Activated CD4-positive, alpha-beta T cell treated with anti-CD3 and anti-CD28 coated beads for 36 hours (primary cell): ENCODE measurements at regions of chr12 and their contacts with region 1.

Region 1: GRCh38 chr12:68641138-68641537 is 30.4 kb downstream of the RAP1B start:
- DNase-seq: peak; percentile 71
- ATAC-seq: peak; percentile 97
- H3K4me3 Mint-ChIP-seq: peak overlapping the region; percentile 46
- H3K27ac Mint-ChIP-seq: peak overlapping the region; percentile 75
- H3K4me1 Mint-ChIP-seq: peaks cover 84% of the 10 kb centered on the region
- H3K27me3 Mint-ChIP-seq: no peaks in the 10 kb centered on the region

Region 2: GRCh38 chr12:68628698-68629097 is 12.4 kb before region 1 on chr12:
- CTCF ChIA-PET with region 1: interaction called, 7 read pairs
- POLR2A ChIA-PET with region 1: interaction called, 5 read pairs
- intact Hi-C with region 1: loop called in 1 of 2 experiments (anchors 1 kb)
- DNase-seq: no peak
- ATAC-seq: no peak
- H3K4me3 Mint-ChIP-seq: no peak overlapping the region
- H3K27ac Mint-ChIP-seq: peak overlapping the region; percentile 60
- H3K4me1 Mint-ChIP-seq: peaks cover 72% of the 10 kb centered on the region
- H3K27me3 Mint-ChIP-seq: no peaks in the 10 kb centered on the region